GM10248 (cell line): ENCODE measurements at regions of chr4 and their contacts with region 1.

Region 1: GRCh38 chr4:25986807-25987206 is 72.8 kb downstream of the SMIM20 start:
- DNase-seq: no peak
- CTCF ChIP-seq: no peak

Region 2: GRCh38 chr4:24529555-24529954 is 1457.3 kb before region 1 on chr4:
- CTCF ChIA-PET with region 1: no interaction called
- POLR2A ChIA-PET with region 1: no interaction called
- DNase-seq: no peak
- CTCF ChIP-seq: no peak

Region 3: GRCh38 chr4:25580633-25581467 is 406.0 kb before region 1 on chr4:
- CTCF ChIA-PET with region 1: no interaction called
- POLR2A ChIA-PET with region 1: no interaction called
- DNase-seq: no peak
- CTCF ChIP-seq: no peak

Region 4: GRCh38 chr4:25970226-25970675 is 16.6 kb before region 1 on chr4:
- CTCF ChIA-PET with region 1: interaction called, 52 read pairs
- POLR2A ChIA-PET with region 1: no interaction called
- DNase-seq: peak; percentile 55
- CTCF ChIP-seq: no peak

Region 5: GRCh38 chr4:26000274-26000950 is 13.6 kb after region 1 on chr4:
- CTCF ChIA-PET with region 1: interaction called, 39 read pairs
- POLR2A ChIA-PET with region 1: no interaction called
- DNase-seq: no peak
- CTCF ChIP-seq: no peak

Region 6: DNA sequence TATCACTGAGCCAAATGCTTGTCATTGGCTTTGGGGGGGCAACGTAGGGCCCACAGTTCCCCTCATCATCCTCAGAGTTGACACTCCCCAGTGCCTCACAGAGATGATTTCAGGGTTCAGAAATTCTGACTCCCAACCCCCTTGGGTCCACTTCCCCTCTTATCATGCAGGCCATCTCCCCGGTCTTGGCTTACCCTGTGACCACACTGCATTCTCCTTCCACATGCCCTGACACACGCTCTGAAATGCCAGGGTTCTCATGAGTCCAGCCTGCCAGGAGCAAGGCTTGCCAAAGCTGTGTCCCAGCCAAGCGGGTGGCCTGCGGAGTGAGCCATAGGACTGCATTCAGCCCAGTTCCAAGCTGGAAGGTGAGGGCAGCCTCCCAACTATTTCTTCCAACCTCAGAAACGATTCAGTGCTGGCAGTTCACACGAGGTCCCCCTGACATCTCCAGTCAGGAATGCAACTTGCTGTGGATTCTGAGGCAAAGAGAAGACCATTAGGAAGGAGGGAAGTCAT is 28.4 kb after region 1 on chr4:
- CTCF ChIA-PET with region 1: interaction called, 20 read pairs
- POLR2A ChIA-PET with region 1: no interaction called
- DNase-seq: no peak
- CTCF ChIP-seq: no peak

Region 7: GRCh38 chr4:26410385-26411293 is 423.8 kb after region 1 on chr4:
- CTCF ChIA-PET with region 1: interaction called, 46 read pairs
- POLR2A ChIA-PET with region 1: no interaction called
- DNase-seq: peak; percentile 55
- CTCF ChIP-seq: peak; percentile 53